Psoas muscle (tissue), 8 donors: ENCODE measurements at regions of chr7 and their contacts with region 1.

Region 1: DNA sequence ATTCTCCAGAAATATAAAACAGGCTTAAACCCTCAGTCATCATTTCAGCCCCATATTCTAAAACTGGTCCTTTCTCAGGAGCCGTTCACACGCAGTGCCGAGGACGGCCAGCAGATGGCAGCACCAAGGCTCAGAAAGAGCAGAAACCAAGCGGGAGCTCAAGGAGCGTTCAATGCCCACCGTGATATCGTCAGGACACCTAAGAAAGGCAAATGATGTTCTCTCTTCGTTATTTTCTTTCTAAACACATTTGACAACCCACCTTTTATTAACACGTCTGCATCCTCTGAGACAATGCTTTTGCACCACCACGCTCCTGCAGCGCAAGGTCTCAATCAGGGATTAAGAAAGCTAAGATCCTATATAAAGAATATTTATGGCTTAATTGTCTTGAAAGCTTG is 45.7 kb upstream of the RBM33 start:
- DNase-seq: peak; percentile 76 to 89
- ATAC-seq: peak; percentile 81 to 90 (median 82)
- H3K4me3 ChIP-seq: no peak overlapping the region
- H3K27ac ChIP-seq: no peak overlapping the region
- H3K4me1 ChIP-seq: peaks cover 3% of the 10 kb centered on the region
- H3K27me3 ChIP-seq: peaks cover 0 to 7% (median 0%) of the 10 kb centered on the region in 3 donors
- CTCF ChIP-seq: peak; percentile 98

Region 2: GRCh38 chr7:155644178-155644970 is 45.6 kb after region 1 on chr7 and contains the start of gene RBM33:
- intact Hi-C with region 1: loop called in 1 of 2 experiments (anchors 5 kb)
- DNase-seq: peak; percentile 79 to 86
- ATAC-seq: peak; percentile 91 to 94 (median 92)
- H3K4me3 ChIP-seq: peak within 1 kb of the TSS; percentile 99
- H3K27ac ChIP-seq: peak within 1 kb of the TSS; percentile 98
- H3K4me1 ChIP-seq: peaks cover 21% of the 10 kb centered on the region
- H3K27me3 ChIP-seq: no peaks in the 10 kb centered on the region
- CTCF ChIP-seq: no peak
- total RNA-seq, gene RBM33: 40.4 to 49.3 (median 43.7) TPM

Region 3: DNA sequence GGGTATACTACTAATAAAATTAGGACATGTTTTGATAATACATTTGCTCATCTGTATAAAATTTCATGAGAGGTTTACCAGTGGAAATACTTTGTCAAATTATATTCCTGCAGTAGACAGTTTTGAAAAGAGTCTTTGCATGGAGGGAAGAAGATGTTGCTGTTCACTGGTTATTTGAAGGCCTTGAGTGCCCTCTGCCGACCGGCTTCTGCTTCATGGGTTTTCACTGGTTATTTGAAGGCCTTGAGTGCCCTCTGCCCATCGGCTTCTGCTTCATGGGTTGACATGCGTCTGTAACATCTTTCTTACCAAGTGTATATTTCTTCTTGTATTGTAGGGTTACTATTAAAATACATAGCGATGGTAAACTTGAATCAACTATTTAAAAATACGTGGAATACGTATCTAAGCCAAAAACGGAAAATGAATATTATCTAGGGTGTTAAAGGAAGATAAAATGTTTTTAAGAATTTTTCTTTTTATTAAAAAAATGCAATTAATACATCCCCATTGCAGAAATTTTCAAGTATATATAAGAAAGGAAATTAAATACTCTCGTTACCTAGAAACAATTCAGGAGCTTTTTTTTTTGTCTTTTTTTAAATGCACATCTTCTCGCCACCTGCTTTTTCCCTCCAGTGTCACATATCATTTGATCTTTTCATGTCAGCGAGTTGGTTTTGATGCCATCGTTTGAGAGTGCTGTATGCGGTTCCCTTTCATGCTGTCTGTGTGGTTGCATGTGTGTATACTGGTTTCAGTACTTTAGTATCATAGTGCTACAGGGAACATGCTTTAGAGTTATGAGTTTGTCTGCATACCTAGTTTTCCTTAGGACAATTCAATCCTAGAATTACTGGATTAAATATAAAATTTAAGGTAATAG is 140.1 kb after region 1 on chr7:
- intact Hi-C with region 1: loop called (anchors 1 to 2 kb)
- DNase-seq: peak; percentile 73 to 85
- ATAC-seq: peak; percentile 75 to 93 (median 83)
- H3K4me3 ChIP-seq: no peak overlapping the region
- H3K27ac ChIP-seq: no peak overlapping the region
- H3K4me1 ChIP-seq: peaks cover 4% of the 10 kb centered on the region
- H3K27me3 ChIP-seq: no peaks in the 10 kb centered on the region
- CTCF ChIP-seq: peak; percentile 71

Region 4: DNA sequence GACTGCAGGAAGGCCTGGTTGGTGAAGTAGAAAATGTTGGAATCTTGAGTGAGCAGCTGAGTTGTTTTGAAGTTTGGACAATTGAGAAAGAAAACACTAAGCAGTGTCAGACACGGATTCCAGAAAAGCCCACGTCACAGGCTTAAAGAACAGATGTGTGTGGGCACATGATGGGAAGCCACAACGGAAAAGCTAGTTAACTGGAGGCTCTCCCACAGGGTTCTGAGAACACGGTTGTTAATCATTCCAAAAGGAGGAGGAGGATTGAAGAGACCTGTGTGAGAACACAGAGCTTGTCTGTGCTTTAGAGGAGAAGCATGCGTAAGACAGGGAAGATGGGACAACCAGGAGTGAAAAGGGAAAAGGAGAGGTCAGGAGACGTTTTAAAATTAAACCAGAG is 170.9 kb after region 1 on chr7:
- intact Hi-C with region 1: loop called (anchors 2 to 5 kb)
- DNase-seq: no peak
- ATAC-seq: peak in 1 of 4 donors; percentile 35
- H3K4me3 ChIP-seq: no peak overlapping the region
- H3K27ac ChIP-seq: no peak overlapping the region
- H3K4me1 ChIP-seq: no peaks in the 10 kb centered on the region
- H3K27me3 ChIP-seq: no peaks in the 10 kb centered on the region
- CTCF ChIP-seq: no peak